Naive thymus-derived CD4-positive, alpha-beta T cell (primary cell): ENCODE measurements at regions of chrX and their contacts with region 1.

Region 1: GRCh38 chrX:20266810-20267606 is at the start of gene RPS6KA3:
- DNase-seq: peak; percentile 83 to 91 (median 88)
- ATAC-seq: peak; percentile 93
- H3K4me3 ChIP-seq: peak within 1 kb of the TSS; percentile 84
- H3K4me3 Mint-ChIP-seq: peak within 1 kb of the TSS; percentile 89 to 98 (median 95)
- H3K27ac ChIP-seq: peak within 1 kb of the TSS; percentile 77
- H3K27ac Mint-ChIP-seq: peak within 1 kb of the TSS; percentile 89 to 95 (median 91)
- H3K4me1 ChIP-seq: peaks cover 0 to 5% of the 10 kb centered on the region in 2 donors
- H3K4me1 Mint-ChIP-seq: peaks cover 0 to 27% (median 20%) of the 10 kb centered on the region in 7 donors
- H3K27me3 ChIP-seq: no peaks in the 10 kb centered on the region
- H3K27me3 Mint-ChIP-seq: peaks cover 0 to 21% (median 0%) of the 10 kb centered on the region in 5 donors
- total RNA-seq, gene RPS6KA3: 59.9 to 77.9 (median 72.6) TPM

Region 2: GRCh38 chrX:18425199-18426003 is 1841.6 kb before region 1 on chrX and contains the start of gene CDKL5:
- CTCF ChIA-PET with region 1: no interaction called
- POLR2A ChIA-PET with region 1: no interaction called
- intact Hi-C with region 1: loop called in 1 of 2 experiments (anchors 2 kb)
- DNase-seq: peak; percentile 83 to 98 (median 96)
- ATAC-seq: peak; percentile 97
- H3K4me3 ChIP-seq: peak within 1 kb of the TSS; percentile 77
- H3K4me3 Mint-ChIP-seq: peak within 1 kb of the TSS; percentile 85 to 95 (median 89)
- H3K27ac ChIP-seq: peak within 1 kb of the TSS; percentile 93
- H3K27ac Mint-ChIP-seq: peak within 1 kb of the TSS; percentile 71 to 92 (median 91)
- H3K4me1 ChIP-seq: peaks cover 0 to 5% of the 10 kb centered on the region in 2 donors
- H3K4me1 Mint-ChIP-seq: peaks cover 5 to 25% (median 13%) of the 10 kb centered on the region in 7 donors
- H3K27me3 ChIP-seq: no peaks in the 10 kb centered on the region
- H3K27me3 Mint-ChIP-seq: peaks cover 0 to 25% (median 0%) of the 10 kb centered on the region in 5 donors
- total RNA-seq, gene CDKL5: 1.2 to 7.0 (median 5.8) TPM

Region 3: GRCh38 chrX:19747652-19748610 is 519.1 kb before region 1 on chrX:
- CTCF ChIA-PET with region 1: no interaction called
- POLR2A ChIA-PET with region 1: no interaction called
- intact Hi-C with region 1: loop called in 1 of 2 experiments (anchors 5 kb)
- DNase-seq: peak; percentile 35 to 90 (median 84)
- ATAC-seq: peak; percentile 89
- H3K4me3 ChIP-seq: peak overlapping the region; percentile 13
- H3K4me3 Mint-ChIP-seq: peak overlapping the region; percentile 42 to 83 (median 71)
- H3K27ac ChIP-seq: peak overlapping the region; percentile 80
- H3K27ac Mint-ChIP-seq: peak overlapping the region; percentile 94 to 99 (median 98)
- H3K4me1 ChIP-seq: peaks cover 88 to 97% of the 10 kb centered on the region in 2 donors
- H3K4me1 Mint-ChIP-seq: peaks cover 33 to 99% (median 88%) of the 10 kb centered on the region in 7 donors
- H3K27me3 ChIP-seq: no peaks in the 10 kb centered on the region
- H3K27me3 Mint-ChIP-seq: no peaks in the 10 kb centered on the region

Region 4: GRCh38 chrX:20252381-20253231 is 14.4 kb before region 1 on chrX:
- CTCF ChIA-PET with region 1: interaction called, 3 read pairs
- POLR2A ChIA-PET with region 1: interaction called, 3 read pairs
- intact Hi-C with region 1: loop called (anchors 1 to 2 kb)
- DNase-seq: peak; percentile 45 to 73 (median 66)
- ATAC-seq: peak; percentile 88
- H3K4me3 ChIP-seq: no peak overlapping the region
- H3K4me3 Mint-ChIP-seq: peak overlapping the region in 1 of 10 donors; percentile 51
- H3K27ac ChIP-seq: no peak overlapping the region
- H3K27ac Mint-ChIP-seq: peak overlapping the region in 5 of 9 donors; percentile 36 to 52 (median 48)
- H3K4me1 ChIP-seq: peaks cover 16 to 31% of the 10 kb centered on the region in 2 donors
- H3K4me1 Mint-ChIP-seq: peaks cover 5 to 64% (median 52%) of the 10 kb centered on the region in 7 donors
- H3K27me3 ChIP-seq: no peaks in the 10 kb centered on the region
- H3K27me3 Mint-ChIP-seq: no peaks in the 10 kb centered on the region

Region 5: DNA sequence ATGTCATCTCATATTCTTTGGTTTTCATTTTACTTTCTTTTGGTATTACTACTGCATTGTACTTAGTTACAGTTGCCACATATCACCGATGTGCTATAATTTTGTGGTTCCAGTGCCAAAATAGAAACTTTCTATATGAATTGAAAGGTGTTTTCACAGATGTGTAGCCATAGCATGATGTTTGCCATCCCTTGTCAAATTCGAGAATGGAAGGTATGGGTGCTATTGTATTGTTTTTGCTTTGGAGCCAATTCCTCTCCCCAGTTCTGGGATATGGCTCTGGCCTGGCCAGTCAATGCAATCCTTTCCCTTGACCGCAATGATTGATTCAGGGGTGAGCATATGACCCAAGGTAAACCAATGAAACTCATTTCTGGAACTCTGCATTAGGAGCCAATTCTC is 85.9 kb after region 1 on chrX:
- CTCF ChIA-PET with region 1: no interaction called
- POLR2A ChIA-PET with region 1: no interaction called
- intact Hi-C with region 1: loop called in 1 of 2 experiments (anchors 2 kb)
- DNase-seq: no peak
- ATAC-seq: no peak
- H3K4me3 ChIP-seq: no peak overlapping the region
- H3K4me3 Mint-ChIP-seq: no peak overlapping the region
- H3K27ac ChIP-seq: no peak overlapping the region
- H3K27ac Mint-ChIP-seq: no peak overlapping the region
- H3K4me1 ChIP-seq: peaks cover 0 to 7% of the 10 kb centered on the region in 2 donors
- H3K4me1 Mint-ChIP-seq: peaks cover 0 to 28% (median 20%) of the 10 kb centered on the region in 7 donors
- H3K27me3 ChIP-seq: no peaks in the 10 kb centered on the region
- H3K27me3 Mint-ChIP-seq: peaks cover 0 to 5% (median 0%) of the 10 kb centered on the region in 5 donors

Region 6: GRCh38 chrX:20442597-20442996 is 175.6 kb after region 1 on chrX:
- CTCF ChIA-PET with region 1: interaction called, 3 read pairs
- POLR2A ChIA-PET with region 1: no interaction called
- intact Hi-C with region 1: loop called (anchors 1 kb)
- DNase-seq: peak; percentile 59 to 84 (median 77)
- ATAC-seq: peak; percentile 96
- H3K4me3 ChIP-seq: no peak overlapping the region
- H3K4me3 Mint-ChIP-seq: peak overlapping the region in 2 of 10 donors; percentile 1 to 39
- H3K27ac ChIP-seq: no peak overlapping the region
- H3K27ac Mint-ChIP-seq: no peak overlapping the region
- H3K4me1 ChIP-seq: peaks cover 45 to 46% of the 10 kb centered on the region in 2 donors
- H3K4me1 Mint-ChIP-seq: peaks cover 12 to 53% (median 45%) of the 10 kb centered on the region in 7 donors
- H3K27me3 ChIP-seq: no peaks in the 10 kb centered on the region
- H3K27me3 Mint-ChIP-seq: peaks cover 0 to 7% (median 0%) of the 10 kb centered on the region in 5 donors

Region 7: DNA sequence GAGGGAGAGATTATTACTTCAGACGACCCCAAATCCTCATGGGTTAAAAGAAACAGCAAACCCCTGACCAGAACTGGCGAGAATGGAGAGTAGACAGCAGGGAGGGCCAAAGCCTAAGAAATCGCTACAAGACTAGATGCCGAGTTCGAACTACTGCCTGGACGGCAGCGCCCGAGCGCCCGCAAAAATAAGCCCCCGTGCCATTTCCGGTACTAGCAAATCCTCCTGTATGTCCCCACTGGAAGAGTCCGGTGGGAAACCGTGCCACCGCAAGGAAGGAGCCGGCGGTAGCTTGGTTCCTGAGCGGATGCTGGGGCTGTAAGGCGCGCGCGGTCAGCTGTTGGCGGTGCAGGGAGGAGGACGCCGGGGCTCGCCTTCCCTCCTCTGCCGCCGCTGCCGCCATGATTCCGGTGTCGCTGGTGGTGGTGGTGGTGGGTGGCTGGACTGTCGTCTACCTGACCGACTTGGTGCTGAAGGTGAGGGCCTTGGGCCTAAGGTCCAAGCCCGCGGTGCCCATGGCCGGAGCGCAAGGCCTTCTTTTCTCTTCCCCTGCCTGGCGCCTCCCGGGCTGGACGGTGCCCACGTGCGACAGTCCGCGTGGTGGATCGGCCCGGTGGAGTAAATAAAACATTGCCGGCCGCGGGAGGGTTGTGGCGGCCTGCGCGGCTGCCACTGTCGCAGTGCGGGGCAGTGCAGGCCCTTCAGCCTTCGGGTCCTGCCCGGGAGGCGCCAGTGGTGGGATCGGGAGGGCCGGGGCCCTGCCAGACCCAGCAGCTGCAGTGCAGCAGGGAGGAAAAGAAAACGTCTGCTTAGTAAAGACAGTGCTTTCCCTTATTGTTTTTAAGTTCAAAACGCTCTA is 1572.6 kb after region 1 on chrX and contains the start of gene MBTPS2:
- CTCF ChIA-PET with region 1: no interaction called
- POLR2A ChIA-PET with region 1: no interaction called
- intact Hi-C with region 1: loop called in 1 of 2 experiments (anchors 2 kb)
- DNase-seq: peak; percentile 51 to 82 (median 77)
- ATAC-seq: peak; percentile 97
- H3K4me3 ChIP-seq: peak within 1 kb of the TSS; percentile 83
- H3K4me3 Mint-ChIP-seq: peak within 1 kb of the TSS; percentile 82 to 96 (median 88)
- H3K27ac ChIP-seq: peak within 1 kb of the TSS; percentile 72
- H3K27ac Mint-ChIP-seq: peak within 1 kb of the TSS; percentile 83 to 95 (median 89)
- H3K4me1 ChIP-seq: peaks cover 0 to 8% of the 10 kb centered on the region in 2 donors
- H3K4me1 Mint-ChIP-seq: peaks cover 0 to 19% (median 7%) of the 10 kb centered on the region in 7 donors
- H3K27me3 ChIP-seq: no peaks in the 10 kb centered on the region
- H3K27me3 Mint-ChIP-seq: peaks cover 0 to 3% (median 0%) of the 10 kb centered on the region in 5 donors
- total RNA-seq, gene MBTPS2: 5.2 to 9.9 (median 7.2) TPM